HCT116 (cell line): ENCODE measurements at regions of chr2 and their contacts with region 1.

Region 1: DNA sequence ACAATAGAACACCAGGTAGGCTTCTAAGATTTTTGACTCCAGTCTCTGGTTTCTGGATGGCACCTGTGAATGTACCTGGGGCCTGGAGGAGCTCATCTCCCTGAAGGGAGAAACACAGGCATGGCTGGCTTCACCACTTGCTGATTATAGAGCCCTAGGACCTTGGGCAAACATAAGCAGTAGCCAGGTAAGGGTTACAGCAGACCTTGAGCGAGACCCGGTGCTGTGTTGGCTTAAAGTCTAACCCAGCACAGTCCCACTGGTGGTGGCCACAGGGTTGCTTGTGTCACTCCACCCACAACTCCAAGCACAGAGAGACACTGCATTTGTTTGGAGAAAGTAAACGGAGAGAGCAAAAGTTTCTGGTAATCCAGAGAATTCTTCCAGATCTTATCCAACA is 104.7 kb upstream of the SPOPL start:
- DNase-seq: no peak
- ATAC-seq: no peak
- H3K4me3 ChIP-seq: no peak overlapping the region
- H3K27ac ChIP-seq: no peak overlapping the region
- H3K4me1 ChIP-seq: peaks cover 0 to 12% of the 10 kb centered on the region in 2 experiments; a peak in 1 of 4 replicates
- H3K27me3 ChIP-seq: no peaks in the 10 kb centered on the region
- CTCF ChIP-seq: no peak
- POLR2A ChIP-seq: no peak
- RAD21 ChIP-seq: no peak

Region 2: DNA sequence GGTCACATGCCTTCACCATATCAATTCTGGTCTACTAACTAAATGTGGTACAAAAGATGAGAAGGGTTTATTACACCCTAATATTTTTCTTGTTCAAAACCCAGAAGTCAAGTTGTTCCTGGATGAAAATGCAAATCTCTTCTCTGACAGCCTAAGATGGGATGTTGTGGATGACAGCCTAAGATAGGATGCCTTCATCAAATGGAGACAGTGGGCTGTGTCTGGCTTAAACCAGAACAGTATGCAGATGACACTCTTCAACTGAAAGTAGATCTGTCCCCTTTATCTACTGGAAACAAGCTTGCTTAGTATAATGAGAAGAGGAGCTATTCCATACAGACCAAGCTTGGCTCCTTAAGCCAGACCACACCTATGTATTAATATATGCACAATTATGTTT is 365.7 kb after region 1 on chr2:
- CTCF ChIA-PET with region 1: no interaction called
- POLR2A ChIA-PET with region 1: no interaction called
- RAD21 ChIA-PET with region 1: no interaction called
- intact Hi-C with region 1: loop called (anchors 1 kb)
- DNase-seq: no peak
- ATAC-seq: no peak
- H3K4me3 ChIP-seq: no peak overlapping the region
- H3K27ac ChIP-seq: no peak overlapping the region
- H3K4me1 ChIP-seq: no peaks in the 10 kb centered on the region; a peak in 1 of 4 replicates
- H3K27me3 ChIP-seq: no peaks in the 10 kb centered on the region
- CTCF ChIP-seq: no peak
- POLR2A ChIP-seq: no peak
- RAD21 ChIP-seq: no peak